Panc1 (cell line): ENCODE measurements at regions of chr15 and their contacts with region 1.

Region 1: DNA sequence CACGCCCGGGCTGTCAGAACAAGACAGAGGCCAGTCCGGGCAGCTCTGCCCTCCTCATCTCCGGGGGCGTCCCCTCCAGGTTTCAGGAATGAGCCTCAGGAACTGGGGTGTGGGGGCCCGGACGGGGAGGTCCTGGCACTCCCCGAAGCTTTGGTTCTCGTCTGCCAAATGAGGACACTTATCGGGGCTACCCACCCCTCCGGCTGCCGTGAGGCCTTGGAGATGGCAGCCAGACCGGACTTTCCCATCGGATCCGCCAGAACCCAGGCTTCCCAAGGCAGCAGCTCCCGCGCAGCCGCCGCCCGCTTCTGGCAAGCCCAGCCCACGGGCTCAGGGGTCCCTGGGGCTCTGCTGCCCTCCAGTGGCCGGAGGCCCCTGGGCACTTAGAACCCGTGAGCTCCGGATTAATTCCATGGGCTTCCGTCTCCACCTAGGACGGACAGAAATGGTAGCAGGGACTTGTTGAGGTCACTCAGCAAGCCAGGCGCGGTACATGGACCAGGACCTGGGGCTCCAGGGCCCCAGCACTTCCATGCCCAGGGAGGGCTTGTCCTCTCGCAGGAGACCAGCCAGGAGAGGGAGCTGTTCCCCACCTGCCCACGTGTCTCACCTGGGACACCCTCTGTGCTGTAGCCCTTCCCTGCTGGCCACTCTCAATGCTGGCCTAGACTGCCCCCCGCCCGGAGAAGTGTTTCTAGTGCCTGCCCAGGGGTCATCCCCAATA is 89.4 kb downstream of the LINGO1 start:
- DNase-seq: peak; percentile 58
- ATAC-seq: peak; percentile 88
- H3K4me3 ChIP-seq: peak overlapping the region; percentile 36 to 56
- H3K27ac ChIP-seq: peak overlapping the region; percentile 90
- H3K4me1 ChIP-seq: peaks cover 61% of the 10 kb centered on the region
- H3K27me3 ChIP-seq: no peaks in the 10 kb centered on the region
- CTCF ChIP-seq: peak; percentile 99

Region 2: DNA sequence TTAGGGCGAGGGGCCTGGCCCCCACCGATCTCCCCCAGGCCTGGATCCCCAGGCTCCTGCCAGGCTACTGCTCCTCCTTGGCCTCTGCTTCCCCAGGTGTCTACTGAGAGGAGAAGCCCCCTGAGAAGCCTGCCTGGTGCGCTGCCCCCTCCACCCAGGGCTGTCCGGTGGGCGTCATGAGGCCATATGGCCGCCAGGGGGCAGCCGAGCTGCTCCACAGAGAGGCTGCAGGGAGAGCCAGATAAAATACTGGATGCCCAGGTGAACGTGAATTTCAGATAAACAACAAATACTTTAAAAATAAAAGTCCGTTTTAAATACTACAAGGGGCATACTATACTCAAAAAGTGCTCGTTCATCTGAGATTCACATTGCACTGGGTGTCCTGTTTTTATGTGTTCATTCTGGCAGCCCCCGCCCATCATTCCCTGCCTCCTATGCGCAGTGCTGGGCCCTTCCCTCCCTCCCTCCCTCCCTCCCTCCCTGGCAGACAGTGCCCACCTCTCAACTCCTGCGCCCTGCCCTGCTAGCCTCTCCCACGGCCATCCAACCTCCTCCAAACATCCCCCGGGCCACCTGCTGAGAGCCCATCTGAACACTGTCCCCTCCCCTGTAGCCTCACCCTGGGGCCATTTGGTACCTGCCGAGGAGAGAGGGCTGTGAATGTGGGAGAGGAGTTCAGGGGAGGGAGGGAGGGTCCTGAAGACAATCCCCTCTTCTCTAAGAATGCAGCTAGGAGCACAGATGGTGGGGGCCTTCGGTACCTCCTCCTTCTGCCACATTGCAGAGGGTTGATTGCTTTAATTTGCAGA is 518.8 kb before region 1 on chr15:
- CTCF ChIA-PET with region 1: no interaction called
- POLR2A ChIA-PET with region 1: no interaction called
- in situ Hi-C with region 1: no loop called
- intact Hi-C with region 1: loop called (anchors 5 kb)
- DNase-seq: peak; percentile 28
- ATAC-seq: peak; percentile 82
- H3K4me3 ChIP-seq: no peak overlapping the region
- H3K27ac ChIP-seq: no peak overlapping the region
- H3K4me1 ChIP-seq: no peaks in the 10 kb centered on the region; the same call in 1 of the 2 replicates
- H3K27me3 ChIP-seq: no peaks in the 10 kb centered on the region
- CTCF ChIP-seq: peak; percentile 98

Region 3: DNA sequence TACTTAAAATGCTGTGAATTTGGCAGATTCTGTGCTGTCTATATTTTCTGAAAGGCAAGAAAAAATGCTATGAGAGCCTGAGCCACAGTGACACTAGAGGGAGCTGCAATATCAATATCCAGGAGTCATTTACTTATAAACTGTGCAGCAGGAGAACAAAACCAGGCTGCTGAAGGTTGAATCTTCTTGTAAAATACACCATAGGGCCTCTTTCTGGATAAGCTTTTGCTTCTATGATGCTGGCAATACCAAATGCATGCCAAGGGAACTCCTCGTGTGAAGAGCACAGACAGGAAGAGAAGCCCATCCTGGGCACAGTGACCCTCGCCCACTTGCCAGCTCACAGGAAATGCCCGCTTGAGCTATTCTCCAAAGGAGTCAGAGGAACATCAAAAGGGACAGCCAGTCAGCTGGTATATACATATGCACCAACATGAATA is 424.4 kb before region 1 on chr15:
- CTCF ChIA-PET with region 1: interaction called, 7 read pairs
- POLR2A ChIA-PET with region 1: no interaction called
- in situ Hi-C with region 1: no loop called
- intact Hi-C with region 1: loop called (anchors 2 kb)
- DNase-seq: peak; percentile 45
- ATAC-seq: peak; percentile 79
- H3K4me3 ChIP-seq: no peak overlapping the region
- H3K27ac ChIP-seq: no peak overlapping the region
- H3K4me1 ChIP-seq: peaks cover 11% of the 10 kb centered on the region
- H3K27me3 ChIP-seq: no peaks in the 10 kb centered on the region
- CTCF ChIP-seq: peak; percentile 73

Region 4: DNA sequence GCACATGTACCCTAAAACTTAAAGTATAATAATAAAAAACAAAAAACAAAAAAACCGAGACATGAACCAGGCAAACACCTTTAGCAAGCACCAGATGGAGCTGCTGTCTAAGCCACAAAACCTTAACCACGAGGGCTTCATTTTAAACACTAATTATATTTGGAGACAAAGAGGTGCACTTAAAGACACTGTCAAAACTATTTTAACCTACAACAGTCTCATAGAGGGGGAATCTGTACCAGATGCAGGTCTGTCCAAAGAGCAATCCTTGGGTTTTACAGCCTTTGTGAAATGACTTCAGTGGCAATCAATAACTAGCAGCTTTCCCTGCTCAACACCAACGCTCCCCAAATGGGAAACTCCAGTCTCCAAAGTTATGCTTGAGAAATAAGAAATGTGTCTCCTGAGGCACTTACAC is 356.7 kb before region 1 on chr15:
- CTCF ChIA-PET with region 1: interaction called, 12 read pairs
- POLR2A ChIA-PET with region 1: no interaction called
- in situ Hi-C with region 1: no loop called
- intact Hi-C with region 1: no loop called
- DNase-seq: no peak
- ATAC-seq: no peak
- H3K4me3 ChIP-seq: no peak overlapping the region
- H3K27ac ChIP-seq: no peak overlapping the region
- H3K4me1 ChIP-seq: peaks cover 4% of the 10 kb centered on the region; the same call in 1 of the 2 replicates
- H3K27me3 ChIP-seq: no peaks in the 10 kb centered on the region
- CTCF ChIP-seq: peak; percentile 67

Region 5: DNA sequence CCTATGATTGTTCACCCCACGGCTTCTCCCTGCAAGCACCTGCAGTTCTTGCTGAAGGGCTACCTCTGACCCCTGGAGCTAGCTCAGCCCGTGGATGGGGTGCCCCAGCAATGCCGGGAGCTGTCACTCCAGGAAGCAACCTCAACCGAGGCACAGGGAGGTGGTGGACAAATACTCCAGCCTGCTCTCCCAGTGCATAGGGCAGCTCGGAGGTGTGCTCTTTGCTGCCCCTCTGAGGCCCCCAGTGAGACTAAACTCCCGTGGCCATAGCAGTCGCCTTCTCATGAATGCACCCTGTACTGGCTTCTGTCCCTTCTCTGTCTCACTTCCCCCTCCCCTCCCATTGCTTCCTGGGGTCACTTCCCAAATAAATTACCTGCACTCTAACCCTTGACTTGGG is 40.9 kb after region 1 on chr15:
- CTCF ChIA-PET with region 1: no interaction called
- POLR2A ChIA-PET with region 1: no interaction called
- in situ Hi-C with region 1: no loop called
- intact Hi-C with region 1: no loop called
- DNase-seq: no peak
- ATAC-seq: peak; percentile 77; the same call in 1 of the 2 replicates
- H3K4me3 ChIP-seq: no peak overlapping the region
- H3K27ac ChIP-seq: no peak overlapping the region
- H3K4me1 ChIP-seq: peaks cover 7% of the 10 kb centered on the region
- H3K27me3 ChIP-seq: no peaks in the 10 kb centered on the region
- CTCF ChIP-seq: no peak